Vagina (tissue), 2 donors: ENCODE measurements at regions of chr13 and their contacts with region 1.

Region 1: DNA sequence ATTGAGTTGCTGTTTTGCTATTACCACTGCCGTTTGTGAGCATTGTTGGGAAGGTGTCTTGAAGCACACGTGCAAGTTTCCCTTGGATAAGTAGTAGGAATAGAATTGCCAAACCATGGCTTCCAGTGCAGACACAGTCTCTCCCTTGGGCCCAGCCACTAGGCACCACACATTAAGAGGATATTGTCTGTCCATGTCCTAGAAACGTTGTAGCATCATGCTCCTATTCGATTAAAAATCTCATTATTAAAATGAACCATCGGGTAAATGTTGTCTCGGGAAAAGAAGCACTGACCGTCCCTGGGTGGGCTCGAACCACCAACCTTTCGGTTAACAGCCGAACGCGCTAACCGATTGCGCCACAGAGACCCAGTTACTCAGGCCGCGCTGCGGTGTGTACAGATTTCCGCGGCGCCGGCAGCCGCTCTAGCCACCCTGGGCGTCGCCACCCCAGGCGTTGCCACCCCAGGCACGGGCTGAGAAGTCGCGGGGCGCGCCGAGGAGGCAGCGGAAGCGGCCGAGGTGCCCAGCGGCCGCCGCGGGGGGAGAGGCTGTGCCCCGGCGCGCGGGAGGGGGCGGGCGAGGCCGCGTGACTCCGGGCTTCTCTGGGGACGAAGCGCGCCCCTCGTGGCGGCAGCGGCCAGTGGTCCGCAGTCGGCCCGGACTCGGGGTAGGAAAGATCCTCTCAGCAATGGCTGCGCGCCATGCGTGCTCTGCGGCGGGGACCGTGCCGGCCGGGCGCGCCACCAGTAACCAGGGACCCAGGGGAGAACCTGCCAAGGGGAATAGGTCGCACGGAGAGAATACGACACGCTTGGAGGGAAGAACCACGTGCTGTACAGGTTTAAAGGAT is 56.2 kb downstream of the USPL1 start:
- DNase-seq: no peak
- H3K4me3 ChIP-seq: peak overlapping the region; percentile 48 to 50
- H3K27ac ChIP-seq: peak overlapping the region; percentile 87
- H3K4me1 ChIP-seq: peaks cover 7% of the 10 kb centered on the region
- H3K27me3 ChIP-seq: no peaks in the 10 kb centered on the region
- CTCF ChIP-seq: peak in 2 of 3 experiments; percentile 32 to 70
- POLR2A ChIP-seq: no peak

Region 2: GRCh38 chr13:30802953-30803478 is 129.1 kb after region 1 on chr13:
- intact Hi-C with region 1: loop called (anchors 10 kb)
- DNase-seq: no peak
- H3K4me3 ChIP-seq: peak overlapping the region; percentile 36 to 44
- H3K27ac ChIP-seq: peak overlapping the region; percentile 57
- H3K4me1 ChIP-seq: peaks cover 49% of the 10 kb centered on the region
- H3K27me3 ChIP-seq: no peaks in the 10 kb centered on the region
- CTCF ChIP-seq: peak; percentile 71 to 95 (median 92)
- POLR2A ChIP-seq: peak in 1 of 2 donors; percentile 10

Region 3: GRCh38 chr13:31044377-31045285 is 370.7 kb after region 1 on chr13:
- intact Hi-C with region 1: loop called (anchors 10 kb)
- DNase-seq: no peak
- H3K4me3 ChIP-seq: no peak overlapping the region
- H3K27ac ChIP-seq: peak overlapping the region; percentile 77
- H3K4me1 ChIP-seq: peaks cover 40% of the 10 kb centered on the region
- H3K27me3 ChIP-seq: no peaks in the 10 kb centered on the region
- CTCF ChIP-seq: peak; percentile 76 to 90 (median 87)
- POLR2A ChIP-seq: no peak